ENCODE measurements at regions of chr1 and their contacts with region 1.

Region 1: GRCh38 chr1:167263819-167264464 is 43.3 kb downstream of the POU2F1 start:
- DNase-seq: no peak
- H3K4me3 Mint-ChIP-seq: no peak overlapping the region
- H3K27ac Mint-ChIP-seq: no peak overlapping the region
- H3K4me1 Mint-ChIP-seq: peaks cover 24% of the 10 kb centered on the region
- H3K27me3 Mint-ChIP-seq: no peaks in the 10 kb centered on the region

Region 2: DNA sequence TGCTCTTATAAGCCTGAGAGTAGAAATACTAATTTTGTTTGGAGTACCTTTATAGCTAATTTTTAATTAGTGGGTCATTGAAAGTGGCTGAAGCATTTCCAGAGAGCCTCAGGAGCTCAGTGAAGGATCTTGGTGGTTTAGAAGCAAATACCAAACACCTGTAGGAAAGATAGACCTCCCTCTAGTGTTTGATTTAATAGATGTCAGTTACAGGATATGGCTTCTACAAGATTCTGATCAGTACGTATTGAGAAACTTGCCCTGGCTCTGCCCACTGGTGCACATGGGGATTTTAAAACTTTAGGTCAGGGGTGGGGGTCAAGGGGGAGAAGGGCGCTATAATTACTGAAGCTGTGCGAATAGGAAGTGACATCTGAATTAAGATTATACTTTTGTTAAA is 78.9 kb after region 1 on chr1:
- intact Hi-C with region 1: loop called (anchors 10 kb)
- DNase-seq: no peak
- H3K4me3 Mint-ChIP-seq: no peak overlapping the region
- H3K27ac Mint-ChIP-seq: no peak overlapping the region
- H3K4me1 Mint-ChIP-seq: peaks cover 3% of the 10 kb centered on the region
- H3K27me3 Mint-ChIP-seq: no peaks in the 10 kb centered on the region

Region 3: DNA sequence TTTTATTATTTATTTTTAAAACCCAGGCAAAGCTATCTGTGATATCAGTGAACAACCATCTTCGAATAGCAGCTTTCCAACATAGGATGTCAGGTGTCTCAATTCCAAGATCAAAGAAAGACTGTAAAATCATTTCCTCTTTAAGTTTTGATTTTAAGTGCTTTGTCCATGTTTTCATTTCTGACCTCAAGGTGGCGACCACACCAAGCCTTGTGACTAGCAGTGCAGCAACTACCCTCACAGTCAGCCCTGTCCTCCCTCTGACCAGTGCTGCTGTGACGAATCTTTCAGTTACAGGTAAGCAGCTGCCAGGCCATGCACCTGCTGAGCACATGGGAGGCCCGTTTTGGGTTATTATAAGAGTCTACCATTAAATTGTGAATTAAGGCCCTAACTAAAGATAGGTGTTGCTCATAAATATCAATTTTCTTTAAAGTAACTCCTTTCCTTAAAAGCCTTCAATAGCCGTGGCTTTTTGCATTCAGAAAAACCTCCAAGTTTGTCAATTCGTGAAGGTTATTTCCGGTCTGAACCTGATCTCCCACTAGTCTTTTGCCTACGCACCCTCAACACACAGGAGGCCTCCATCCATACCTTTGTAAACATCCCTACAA is 137.4 kb after region 1 on chr1:
- intact Hi-C with region 1: loop called (anchors 5 kb)
- DNase-seq: peak; percentile 33
- H3K4me3 Mint-ChIP-seq: no peak overlapping the region
- H3K27ac Mint-ChIP-seq: no peak overlapping the region
- H3K4me1 Mint-ChIP-seq: peaks cover 1% of the 10 kb centered on the region
- H3K27me3 Mint-ChIP-seq: no peaks in the 10 kb centered on the region

Region 4: DNA sequence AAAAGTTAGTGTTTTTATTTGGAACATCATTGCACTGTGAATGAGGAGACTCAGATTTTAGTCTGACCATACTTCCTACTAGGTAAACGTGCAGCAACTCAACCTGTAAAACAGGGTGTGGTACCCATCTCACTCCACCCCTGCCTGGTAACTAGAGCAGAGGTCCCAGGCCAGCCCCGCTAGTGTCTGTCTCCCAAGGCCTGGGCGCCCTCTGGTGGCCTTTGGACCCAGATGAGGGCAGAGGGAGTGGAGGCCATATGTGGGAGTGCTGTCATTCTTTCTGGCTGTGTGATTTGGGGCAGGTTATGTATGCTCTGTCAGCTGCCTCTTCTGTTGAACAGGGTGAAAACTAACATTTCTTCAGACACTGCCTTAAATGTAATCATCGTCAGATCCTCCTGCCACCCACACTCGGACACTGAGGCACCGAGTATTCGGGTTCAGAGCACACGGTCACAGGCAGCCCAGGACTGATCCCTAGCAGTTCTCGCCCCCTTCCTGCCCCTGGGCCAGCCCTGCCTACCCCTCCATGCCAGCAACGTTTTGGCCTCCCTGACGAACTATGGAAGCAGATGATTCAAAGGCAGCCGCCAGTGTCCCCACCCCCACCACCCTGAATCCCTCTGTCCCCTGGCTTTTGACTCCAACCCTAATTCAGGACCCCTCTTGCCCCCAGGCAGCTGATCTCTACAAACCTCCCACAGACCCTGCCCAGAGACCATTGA is 178.3 kb after region 1 on chr1:
- intact Hi-C with region 1: loop called (anchors 1 kb)
- DNase-seq: peak; percentile 79
- H3K4me3 Mint-ChIP-seq: no peak overlapping the region
- H3K27ac Mint-ChIP-seq: peak overlapping the region; percentile 30
- H3K4me1 Mint-ChIP-seq: peaks cover 65% of the 10 kb centered on the region
- H3K27me3 Mint-ChIP-seq: no peaks in the 10 kb centered on the region

Region 5: GRCh38 chr1:167533851-167534300 is 269.9 kb after region 1 on chr1:
- intact Hi-C with region 1: loop called (anchors 2 kb)
- DNase-seq: peak; percentile 47
- H3K4me3 Mint-ChIP-seq: no peak overlapping the region
- H3K27ac Mint-ChIP-seq: no peak overlapping the region
- H3K4me1 Mint-ChIP-seq: peaks cover 4% of the 10 kb centered on the region
- H3K27me3 Mint-ChIP-seq: peaks cover 3% of the 10 kb centered on the region

Measured in activated T-helper 2 cell treated with anti-CD3 and anti-CD28 coated beads, Interferon-gamma antibody, Interleukin-2, Interleukin-4, amounts not matched to agents 10 μg/mL and 5 μg/mL and 100 μg/mL, durations not matched to agents 14 hours and 24 hours and 36 hours (primary cell).